Breast epithelium (tissue), 4 donors: ENCODE measurements at regions of chr6 and their contacts with region 1.

Region 1: DNA sequence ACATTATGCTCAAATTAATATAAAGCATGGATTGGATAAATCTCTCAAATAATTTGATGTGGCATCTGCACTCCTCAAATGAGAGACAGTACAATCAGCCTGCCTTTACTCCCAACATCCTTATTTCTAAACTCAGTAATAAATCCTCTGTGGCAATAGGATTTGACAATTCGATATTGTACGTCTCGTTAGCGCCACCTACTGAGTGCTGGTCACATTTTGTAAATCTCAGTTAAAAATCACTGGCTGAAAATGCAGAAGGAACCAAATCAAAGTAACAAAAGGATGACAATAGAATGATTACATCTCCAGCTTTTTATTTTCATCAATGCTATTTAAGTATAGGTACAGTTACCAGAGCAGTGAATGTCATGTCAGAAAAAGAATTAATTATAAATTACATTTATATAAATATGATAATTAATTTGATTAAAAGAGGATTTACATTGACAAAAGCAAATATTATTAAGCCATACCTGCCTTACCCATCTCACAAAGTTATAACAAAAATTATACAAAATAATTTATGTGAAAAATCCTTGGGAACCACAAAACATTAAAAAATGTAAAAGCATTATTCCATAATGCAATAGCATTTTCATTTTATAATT is 20.2 kb upstream of the GJE1 start:
- DNase-seq: peak; percentile 23 to 60
- H3K4me3 ChIP-seq: no peak overlapping the region
- H3K27ac ChIP-seq: no peak overlapping the region
- H3K4me1 ChIP-seq: no peaks in the 10 kb centered on the region
- H3K27me3 ChIP-seq: no peaks in the 10 kb centered on the region
- CTCF ChIP-seq: peak; percentile 49 to 56 (median 51)
- POLR2A ChIP-seq: no peak

Region 2: DNA sequence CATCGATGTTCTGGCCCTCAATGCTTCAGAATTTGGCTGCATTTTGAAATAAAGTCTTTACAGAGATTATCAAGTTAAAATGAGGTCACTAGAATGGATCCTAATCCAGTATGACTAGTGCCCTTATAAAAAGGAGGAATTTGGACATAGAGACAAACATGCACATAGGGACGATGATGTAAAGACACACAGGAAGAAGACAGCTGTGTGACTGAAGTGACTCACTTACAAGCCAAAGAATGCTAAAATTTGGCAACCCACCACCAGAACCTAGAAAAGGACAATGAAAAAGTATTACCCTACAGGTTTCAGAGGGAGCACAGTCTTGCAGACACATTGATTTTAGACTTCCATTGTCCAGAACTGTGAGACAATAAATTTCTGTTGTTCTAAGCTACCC is 302.7 kb before region 1 on chr6:
- intact Hi-C with region 1: loop called (anchors 5 kb)
- DNase-seq: no peak
- H3K4me3 ChIP-seq: no peak overlapping the region
- H3K27ac ChIP-seq: no peak overlapping the region
- H3K4me1 ChIP-seq: no peaks in the 10 kb centered on the region
- H3K27me3 ChIP-seq: no peaks in the 10 kb centered on the region
- CTCF ChIP-seq: no peak
- POLR2A ChIP-seq: no peak

Region 3: GRCh38 chr6:142207265-142207877 is 94.8 kb after region 1 on chr6:
- intact Hi-C with region 1: no loop called
- DNase-seq: no peak
- H3K4me3 ChIP-seq: no peak overlapping the region
- H3K27ac ChIP-seq: no peak overlapping the region
- H3K4me1 ChIP-seq: no peaks in the 10 kb centered on the region
- H3K27me3 ChIP-seq: no peaks in the 10 kb centered on the region
- CTCF ChIP-seq: peak; percentile 21 to 58 (median 47)
- POLR2A ChIP-seq: no peak